Lower leg skin (tissue), 4 donors: ENCODE measurements at regions of chr16 and their contacts with region 1.

Region 1: GRCh38 chr16:88194397-88195268 is 188.1 kb upstream of the ZNF469 start:
- DNase-seq: peak; percentile 72 to 93
- H3K4me3 ChIP-seq: no peak overlapping the region
- CTCF ChIP-seq: no peak
- POLR2A ChIP-seq: no peak

Region 2: DNA sequence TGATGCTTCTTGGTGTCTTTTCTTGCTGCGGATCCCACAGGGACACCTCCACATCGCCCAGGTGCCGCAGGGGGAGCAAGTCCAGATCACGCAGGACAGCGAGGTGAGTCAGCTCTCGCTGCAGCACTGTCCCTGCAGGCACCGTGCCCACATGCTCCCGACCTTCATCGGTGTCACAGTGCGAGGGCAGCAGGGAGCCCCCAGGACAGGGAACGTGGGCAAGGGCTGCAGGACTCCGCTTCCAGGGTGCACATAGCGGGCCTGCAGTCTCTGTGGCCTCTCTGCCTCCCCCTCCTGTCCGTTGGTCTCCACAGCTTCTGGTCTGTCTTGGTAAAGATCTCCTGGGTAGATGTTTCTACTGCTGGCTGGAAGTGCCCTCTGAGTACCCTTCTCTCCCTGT is 159.3 kb before region 1 on chr16:
- intact Hi-C with region 1: no loop called
- DNase-seq: no peak
- H3K4me3 ChIP-seq: no peak overlapping the region
- CTCF ChIP-seq: no peak
- POLR2A ChIP-seq: no peak

Region 3: DNA sequence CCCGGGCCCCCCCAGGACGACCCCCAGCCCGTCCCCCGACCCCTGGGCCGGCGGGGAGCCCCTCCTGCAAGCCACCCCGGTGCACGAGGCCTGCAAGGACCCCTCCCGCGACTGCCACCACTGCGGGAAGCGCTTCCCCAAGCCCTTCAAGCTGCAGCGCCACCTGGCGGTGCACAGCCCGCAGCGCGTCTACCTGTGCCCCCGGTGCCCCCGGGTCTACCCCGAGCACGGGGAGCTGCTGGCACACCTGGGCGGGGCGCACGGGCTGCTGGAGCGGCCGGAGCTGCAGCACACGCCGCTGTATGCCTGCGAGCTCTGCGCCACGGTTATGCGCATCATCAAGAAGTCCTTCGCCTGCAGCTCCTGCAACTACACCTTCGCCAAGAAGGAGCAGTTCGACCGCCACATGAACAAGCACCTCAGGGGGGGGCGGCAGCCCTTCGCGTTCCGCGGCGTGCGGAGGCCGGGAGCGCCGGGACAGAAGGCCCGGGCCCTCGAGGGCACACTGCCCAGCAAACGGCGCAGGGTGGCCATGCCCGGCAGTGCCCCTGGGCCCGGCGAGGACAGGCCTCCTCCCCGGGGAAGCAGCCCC is 242.8 kb after region 1 on chr16:
- intact Hi-C with region 1: loop called (anchors 5 kb)
- DNase-seq: no peak
- H3K4me3 ChIP-seq: no peak overlapping the region
- CTCF ChIP-seq: peak in 1 of 3 donors; percentile 52
- POLR2A ChIP-seq: no peak